AG04449 (cell line): ENCODE measurements at regions of chr15 and their contacts with region 1.

Region 1: GRCh38 chr15:41989259-41989933 is 17.0 kb upstream of the EHD4 start:
- DNase-seq: no peak
- H3K4me3 ChIP-seq: no peak overlapping the region
- CTCF ChIP-seq: peak; percentile 99

Region 2: DNA sequence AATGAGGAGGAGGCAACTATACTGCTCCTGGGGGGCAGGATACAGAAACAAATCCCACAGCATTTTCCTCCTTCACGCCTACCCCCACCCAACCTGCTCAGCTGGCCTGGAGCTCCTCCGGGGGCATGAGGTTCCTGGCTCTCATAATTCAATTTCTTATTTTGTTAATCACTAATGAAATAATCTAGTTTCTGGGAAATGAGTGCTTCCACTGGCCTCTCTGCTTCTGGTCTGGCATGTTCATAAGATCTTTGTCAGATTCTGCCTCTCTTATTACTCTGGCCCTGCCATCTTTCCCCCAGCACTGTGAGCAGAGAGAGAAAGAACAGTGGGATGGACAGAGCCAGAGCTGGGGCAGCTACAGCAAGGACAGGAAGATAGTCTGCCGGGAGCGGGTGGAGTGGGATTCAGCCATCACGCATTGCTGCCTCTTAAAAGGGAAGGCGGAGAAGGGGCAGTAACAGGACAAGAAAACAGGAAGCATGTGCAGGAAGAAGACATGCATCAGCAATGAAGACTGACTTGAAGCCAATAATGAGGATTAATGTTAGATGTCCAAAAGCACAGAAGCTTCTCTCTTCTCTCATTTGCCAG is 458.9 kb before region 1 on chr15:
- CTCF ChIA-PET with region 1: no interaction called
- POLR2A ChIA-PET with region 1: no interaction called
- DNase-seq: no peak
- H3K4me3 ChIP-seq: no peak overlapping the region
- CTCF ChIP-seq: no peak

Region 3: GRCh38 chr15:41849861-41850260 is 139.5 kb before region 1 on chr15:
- CTCF ChIA-PET with region 1: no interaction called
- POLR2A ChIA-PET with region 1: no interaction called
- DNase-seq: no peak
- H3K4me3 ChIP-seq: no peak overlapping the region
- CTCF ChIP-seq: no peak

Region 4: DNA sequence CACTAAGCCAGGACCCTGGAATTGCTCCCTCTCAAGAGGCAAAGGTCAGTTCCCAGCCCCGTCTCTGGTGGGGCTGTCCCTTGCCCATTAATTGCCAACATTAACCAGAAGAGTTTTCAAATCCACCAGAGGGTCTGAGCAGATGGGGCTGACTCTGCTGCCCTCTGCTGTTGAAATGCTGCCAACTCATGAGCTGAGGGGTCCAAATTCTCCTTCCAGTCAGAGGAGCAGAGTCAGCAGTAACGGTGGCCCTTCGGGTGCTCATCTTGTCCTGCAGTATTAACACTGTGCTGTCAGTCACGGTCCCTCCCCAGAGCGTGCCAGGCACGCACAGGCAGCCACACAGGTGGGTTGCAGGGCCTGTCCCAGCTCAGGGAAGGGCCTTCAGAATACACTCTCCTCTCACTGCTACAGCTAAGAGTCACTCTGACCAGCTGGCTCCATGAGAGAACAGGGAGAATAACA is 84.8 kb before region 1 on chr15:
- CTCF ChIA-PET with region 1: no interaction called
- POLR2A ChIA-PET with region 1: no interaction called
- DNase-seq: no peak
- H3K4me3 ChIP-seq: no peak overlapping the region
- CTCF ChIP-seq: peak; percentile 91

Region 5: GRCh38 chr15:41972253-41973242 is 16.8 kb before region 1 on chr15 and contains the start of gene EHD4:
- CTCF ChIA-PET with region 1: interaction called, 44 read pairs
- POLR2A ChIA-PET with region 1: no interaction called
- DNase-seq: peak; percentile 89
- H3K4me3 ChIP-seq: peak within 1 kb of the TSS; percentile 99
- CTCF ChIP-seq: peak; percentile 34

Region 6: GRCh38 chr15:41999290-42000285 is 10.2 kb after region 1 on chr15:
- CTCF ChIA-PET with region 1: interaction called, 50 read pairs
- POLR2A ChIA-PET with region 1: no interaction called
- DNase-seq: no peak
- H3K4me3 ChIP-seq: no peak overlapping the region
- CTCF ChIP-seq: no peak

Region 7: GRCh38 chr15:42056934-42057779 is 67.8 kb after region 1 on chr15:
- CTCF ChIA-PET with region 1: interaction called, 169 read pairs
- POLR2A ChIA-PET with region 1: no interaction called
- DNase-seq: no peak
- H3K4me3 ChIP-seq: peak overlapping the region; percentile 38
- CTCF ChIP-seq: peak; percentile 59

Region 8: GRCh38 chr15:42065033-42065432 is 75.6 kb after region 1 on chr15:
- CTCF ChIA-PET with region 1: interaction called, 75 read pairs
- POLR2A ChIA-PET with region 1: no interaction called
- DNase-seq: no peak
- H3K4me3 ChIP-seq: no peak overlapping the region
- CTCF ChIP-seq: no peak

Region 9: GRCh38 chr15:42137431-42138261 is 148.2 kb after region 1 on chr15:
- CTCF ChIA-PET with region 1: interaction called, 115 read pairs
- POLR2A ChIA-PET with region 1: no interaction called
- DNase-seq: no peak
- H3K4me3 ChIP-seq: no peak overlapping the region
- CTCF ChIP-seq: peak; percentile 59